Natural killer cell (primary cell): ENCODE measurements at regions of chr3 and their contacts with region 1.

Region 1: DNA sequence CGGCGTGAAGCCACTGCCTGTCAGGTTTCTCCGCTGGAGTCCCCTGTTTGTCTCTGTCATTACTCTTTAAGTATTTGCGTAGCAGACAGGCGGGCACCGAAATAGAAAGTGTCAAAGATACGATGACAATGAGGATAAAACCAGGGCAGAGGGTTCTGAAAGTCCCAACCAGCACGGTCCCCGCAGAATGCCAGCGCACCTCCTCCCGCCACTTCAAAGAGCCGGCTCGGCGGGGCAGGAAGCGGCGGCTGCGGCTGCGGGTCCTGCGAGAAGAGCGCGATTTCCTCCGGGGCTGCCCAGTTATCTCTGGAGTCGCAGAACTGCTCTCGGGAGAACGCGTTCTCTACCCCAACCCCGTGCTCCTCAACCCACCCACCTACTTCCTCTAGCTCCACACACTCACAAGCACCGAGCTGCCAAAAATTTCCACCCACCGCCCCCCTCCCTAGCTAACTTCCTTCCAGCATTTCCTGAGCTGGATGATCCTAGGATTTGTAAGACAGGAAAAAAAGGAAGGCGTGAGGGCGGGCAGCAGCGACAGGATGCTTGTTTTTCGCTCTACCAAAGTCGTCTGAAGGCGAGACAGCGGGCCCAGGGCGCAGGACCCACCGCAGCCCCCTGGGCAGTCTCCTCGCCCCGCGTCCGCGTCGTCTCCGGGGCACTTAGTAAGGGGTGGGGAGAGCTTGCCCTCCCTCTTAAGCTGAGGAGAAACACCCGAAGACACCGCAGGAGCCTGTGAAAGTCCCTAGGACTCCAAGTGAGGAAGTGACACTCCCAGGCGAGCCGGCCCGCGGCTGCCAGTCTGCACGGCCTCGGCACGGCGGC is at the start of gene ARHGAP31:
- DNase-seq: peak; percentile 81 to 94
- ATAC-seq: peak; percentile 65 to 82 (median 70)
- H3K4me3 ChIP-seq: peak within 1 kb of the TSS; percentile 82
- H3K4me3 Mint-ChIP-seq: peak within 1 kb of the TSS; percentile 95
- H3K27ac ChIP-seq: peak within 1 kb of the TSS; percentile 99
- H3K27ac Mint-ChIP-seq: peak within 1 kb of the TSS; percentile 95 to 97
- H3K4me1 ChIP-seq: peaks cover 60% of the 10 kb centered on the region
- H3K4me1 Mint-ChIP-seq: peaks cover 72 to 74% of the 10 kb centered on the region in 2 donors
- H3K27me3 ChIP-seq: peaks cover 9% of the 10 kb centered on the region
- H3K27me3 Mint-ChIP-seq: peaks cover 9 to 15% of the 10 kb centered on the region in 2 donors
- CTCF ChIP-seq: no peak
- total RNA-seq, gene ARHGAP31: 4.1 to 8.4 (median 8.4) TPM

Region 2: DNA sequence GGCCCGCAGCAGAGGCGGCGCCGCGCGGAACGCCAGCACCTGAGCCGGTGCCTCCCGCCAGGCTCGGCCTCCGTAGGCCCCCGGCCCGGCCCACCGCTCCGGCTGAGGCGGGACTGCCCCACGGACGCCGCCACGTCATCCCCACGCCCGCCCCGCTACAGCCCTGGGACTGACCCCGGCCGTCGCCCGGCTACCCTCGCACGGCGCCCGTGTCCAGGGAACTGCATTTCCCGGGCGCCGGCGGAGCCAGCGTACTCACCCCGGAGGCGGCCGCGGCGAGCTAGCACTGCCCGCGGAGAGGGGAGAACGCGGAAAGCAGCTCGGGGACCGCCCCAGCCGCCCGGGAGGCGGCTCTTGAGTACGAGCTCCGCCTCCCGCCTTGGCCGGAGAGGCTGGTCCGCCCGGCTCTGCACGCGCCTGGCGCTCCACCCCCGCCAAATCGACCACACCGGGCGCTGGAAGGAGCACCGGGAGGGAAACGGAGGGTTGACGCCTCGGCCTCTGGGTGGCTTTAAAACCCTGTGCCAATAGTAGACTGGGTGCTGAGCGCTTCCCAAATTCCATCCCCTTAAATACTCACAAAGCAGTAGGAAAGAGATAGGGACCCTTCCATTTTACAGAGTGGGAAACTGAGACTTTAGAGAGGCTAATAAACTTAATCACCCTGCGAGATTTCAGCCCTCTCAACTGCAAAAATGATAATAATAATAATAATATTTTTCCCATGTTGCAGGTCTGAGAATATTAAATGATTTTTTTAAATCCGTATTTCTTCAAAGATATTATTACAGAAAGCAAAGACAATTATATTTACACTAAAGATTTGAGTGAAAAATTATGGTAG is 53.3 kb before region 1 on chr3 and contains the start of gene B4GALT4:
- intact Hi-C with region 1: loop called (anchors 2 kb)
- DNase-seq: peak; percentile 79 to 80
- ATAC-seq: peak; percentile 78 to 91 (median 84)
- H3K4me3 ChIP-seq: peak within 1 kb of the TSS; percentile 49
- H3K4me3 Mint-ChIP-seq: peak within 1 kb of the TSS; percentile 96
- H3K27ac ChIP-seq: peak within 1 kb of the TSS; percentile 79
- H3K27ac Mint-ChIP-seq: peak within 1 kb of the TSS; percentile 92 to 96
- H3K4me1 ChIP-seq: peaks cover 37% of the 10 kb centered on the region
- H3K4me1 Mint-ChIP-seq: peaks cover 29 to 37% of the 10 kb centered on the region in 2 donors
- H3K27me3 ChIP-seq: no peaks in the 10 kb centered on the region
- H3K27me3 Mint-ChIP-seq: no peaks in the 10 kb centered on the region
- CTCF ChIP-seq: no peak
- total RNA-seq, gene B4GALT4: 35.1 to 54.1 (median 48.8) TPM

Region 3: DNA sequence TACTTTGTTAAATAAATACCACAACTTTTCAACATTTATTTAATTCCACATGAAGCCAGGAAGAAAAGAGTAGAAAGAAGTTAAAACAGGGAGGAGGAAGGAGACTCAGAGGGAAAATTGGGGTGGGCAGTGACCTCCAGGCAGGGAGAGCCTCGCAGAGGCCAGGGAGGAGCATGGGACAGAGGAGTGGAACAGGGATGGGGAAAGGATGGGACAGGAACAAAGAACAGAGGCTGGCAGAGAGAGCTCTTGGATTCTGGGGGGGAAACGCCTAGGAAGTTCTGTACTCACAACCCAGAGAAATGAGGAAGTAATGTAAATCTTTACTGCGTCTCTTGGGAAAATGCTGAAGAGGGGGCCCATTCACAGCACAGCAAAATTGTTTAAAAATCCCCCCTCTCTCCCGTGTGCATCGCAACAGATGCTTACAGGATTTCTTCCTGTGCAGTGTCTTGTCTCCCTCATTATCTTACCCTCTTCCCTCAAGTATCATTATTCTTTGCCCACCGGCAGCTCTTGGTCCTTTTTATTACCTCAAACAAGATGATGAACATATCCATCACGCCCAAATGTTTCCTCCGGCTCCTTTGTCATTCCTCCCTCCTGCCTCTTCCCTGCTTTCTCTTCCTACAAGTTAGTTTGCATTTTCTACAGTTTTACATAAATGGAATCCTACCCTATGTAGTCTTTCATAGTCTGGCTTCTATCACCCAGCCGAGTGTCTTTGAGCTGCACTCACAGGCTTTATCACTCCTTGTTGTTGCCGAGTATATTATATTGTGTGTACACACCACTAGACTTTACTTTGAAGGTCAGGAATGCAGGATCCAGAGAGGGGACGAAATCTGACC is 65.6 kb after region 1 on chr3:
- intact Hi-C with region 1: no loop called
- DNase-seq: no peak
- ATAC-seq: no peak
- H3K4me3 ChIP-seq: no peak overlapping the region
- H3K4me3 Mint-ChIP-seq: no peak overlapping the region
- H3K27ac ChIP-seq: no peak overlapping the region
- H3K27ac Mint-ChIP-seq: no peak overlapping the region
- H3K4me1 ChIP-seq: no peaks in the 10 kb centered on the region
- H3K4me1 Mint-ChIP-seq: peaks cover 5 to 7% of the 10 kb centered on the region in 2 donors
- H3K27me3 ChIP-seq: no peaks in the 10 kb centered on the region
- H3K27me3 Mint-ChIP-seq: no peaks in the 10 kb centered on the region
- CTCF ChIP-seq: no peak